ENCODE measurements at regions of chr7 and their contacts with region 1.

Region 1: GRCh38 chr7:22110227-22110839 is 164.6 kb upstream of the CDCA7L start:
- DNase-seq: peak; percentile 78
- H3K4me3 ChIP-seq: no peak overlapping the region
- H3K27ac ChIP-seq: no peak overlapping the region
- H3K4me1 ChIP-seq: peaks cover 0 to 9% (median 0%) of the 10 kb centered on the region in 4 donors
- H3K27me3 ChIP-seq: no peaks in the 10 kb centered on the region
- CTCF ChIP-seq: peak; percentile 67 to 74 (median 72)
- EP300 ChIP-seq: no peak
- POLR2A ChIP-seq: no peak

Region 2: GRCh38 chr7:22255834-22256233 is 145.5 kb after region 1 on chr7:
- intact Hi-C with region 1: loop called (anchors 10 kb)
- DNase-seq: no peak
- H3K4me3 ChIP-seq: no peak overlapping the region
- H3K27ac ChIP-seq: no peak overlapping the region
- H3K4me1 ChIP-seq: no peaks in the 10 kb centered on the region
- H3K27me3 ChIP-seq: no peaks in the 10 kb centered on the region
- CTCF ChIP-seq: no peak
- EP300 ChIP-seq: no peak
- POLR2A ChIP-seq: no peak

Region 3: GRCh38 chr7:22488643-22489462 is 378.5 kb after region 1 on chr7:
- intact Hi-C with region 1: loop called (anchors 1 kb)
- DNase-seq: peak; percentile 76
- H3K4me3 ChIP-seq: no peak overlapping the region
- H3K27ac ChIP-seq: no peak overlapping the region
- H3K4me1 ChIP-seq: no peaks in the 10 kb centered on the region
- H3K27me3 ChIP-seq: no peaks in the 10 kb centered on the region
- CTCF ChIP-seq: peak in 3 of 4 experiments; percentile 72 to 90 (median 79)
- EP300 ChIP-seq: no peak
- POLR2A ChIP-seq: no peak

Measured in sigmoid colon (tissue), 7 donors.